Activated CD4-positive, alpha-beta memory T cell treated with anti-CD3 and anti-CD28 coated beads for 36 hours (primary cell): ENCODE measurements at regions of chr1 and their contacts with region 1.

Region 1: GRCh38 chr1:36149237-36149972 is at the start of gene TRAPPC3:
- DNase-seq: peak; percentile 100
- H3K4me3 Mint-ChIP-seq: peak within 1 kb of the TSS; percentile 100
- H3K27ac Mint-ChIP-seq: peak within 1 kb of the TSS; percentile 92
- H3K4me1 Mint-ChIP-seq: peaks cover 67% of the 10 kb centered on the region
- H3K27me3 Mint-ChIP-seq: no peaks in the 10 kb centered on the region
- total RNA-seq, gene TRAPPC3: 56.7 to 56.8 TPM

Region 2: DNA sequence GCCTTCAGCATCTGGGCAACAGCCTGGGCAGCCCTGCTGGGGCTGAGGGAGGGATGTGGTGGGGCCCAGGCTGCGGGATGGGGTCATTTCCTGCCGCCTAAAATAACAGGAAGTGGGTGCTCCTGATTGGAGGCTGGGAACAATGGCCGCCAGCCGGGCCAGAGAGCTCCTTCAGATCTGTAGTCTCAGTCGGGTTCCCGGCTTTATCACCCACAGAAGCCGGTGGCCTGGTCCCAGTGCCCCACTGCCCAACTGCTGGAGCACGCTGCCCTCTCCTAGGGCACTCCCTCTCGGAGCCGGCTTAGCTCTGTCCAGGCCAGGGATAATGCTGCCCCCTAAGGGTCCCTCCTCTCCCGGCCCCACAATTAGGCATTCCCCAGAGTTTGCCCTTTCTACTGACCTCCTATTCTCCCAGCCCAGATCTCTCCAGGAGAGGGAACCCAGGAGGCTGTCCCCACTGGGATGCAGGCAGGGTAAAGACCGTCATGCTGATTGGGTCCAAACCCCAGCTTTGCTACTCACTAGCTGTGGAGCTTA is 11.6 kb after region 1 on chr1:
- CTCF ChIA-PET with region 1: interaction called, 110 read pairs
- POLR2A ChIA-PET with region 1: interaction called, 69 read pairs
- intact Hi-C with region 1: loop called (anchors 1 kb)
- DNase-seq: peak; percentile 88
- H3K4me3 Mint-ChIP-seq: peak overlapping the region; percentile 72
- H3K27ac Mint-ChIP-seq: peak overlapping the region; percentile 95
- H3K4me1 Mint-ChIP-seq: peaks cover 59% of the 10 kb centered on the region
- H3K27me3 Mint-ChIP-seq: no peaks in the 10 kb centered on the region

Region 3: GRCh38 chr1:36223993-36224536 is 74.7 kb after region 1 on chr1 and contains the start of gene THRAP3:
- CTCF ChIA-PET with region 1: interaction called, 37 read pairs
- POLR2A ChIA-PET with region 1: interaction called, 13 read pairs
- intact Hi-C with region 1: loop called (anchors 1 kb)
- DNase-seq: peak; percentile 100
- H3K4me3 Mint-ChIP-seq: peak within 1 kb of the TSS; percentile 99
- H3K27ac Mint-ChIP-seq: peak within 1 kb of the TSS; percentile 100
- H3K4me1 Mint-ChIP-seq: peaks cover 30% of the 10 kb centered on the region
- H3K27me3 Mint-ChIP-seq: no peaks in the 10 kb centered on the region
- total RNA-seq, gene THRAP3: 135 to 138 TPM

Region 4: DNA sequence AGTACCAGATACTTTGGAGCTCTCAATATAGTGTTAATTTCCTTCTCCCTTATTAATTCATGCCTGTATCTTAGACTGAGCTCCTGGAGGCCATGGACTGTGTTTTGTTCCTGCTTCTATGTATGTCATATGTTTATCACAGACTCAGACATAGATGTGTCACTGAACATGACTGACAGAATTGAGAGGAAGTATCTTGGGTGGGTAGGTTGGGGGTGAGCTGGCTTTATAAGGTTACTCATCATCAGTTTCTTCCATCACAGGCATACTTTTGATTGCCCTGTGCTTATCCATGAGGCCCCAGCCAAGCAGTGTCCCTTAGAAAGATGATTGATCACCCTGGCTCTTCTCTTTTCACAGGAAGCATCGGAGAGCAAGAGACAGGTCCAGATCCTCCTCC is 151.1 kb after region 1 on chr1:
- CTCF ChIA-PET with region 1: interaction called, 20 read pairs
- POLR2A ChIA-PET with region 1: no interaction called
- intact Hi-C with region 1: no loop called
- DNase-seq: peak; percentile 44
- H3K4me3 Mint-ChIP-seq: peak overlapping the region; percentile 3
- H3K27ac Mint-ChIP-seq: peak overlapping the region; percentile 95
- H3K4me1 Mint-ChIP-seq: peaks cover 61% of the 10 kb centered on the region
- H3K27me3 Mint-ChIP-seq: no peaks in the 10 kb centered on the region

Region 5: DNA sequence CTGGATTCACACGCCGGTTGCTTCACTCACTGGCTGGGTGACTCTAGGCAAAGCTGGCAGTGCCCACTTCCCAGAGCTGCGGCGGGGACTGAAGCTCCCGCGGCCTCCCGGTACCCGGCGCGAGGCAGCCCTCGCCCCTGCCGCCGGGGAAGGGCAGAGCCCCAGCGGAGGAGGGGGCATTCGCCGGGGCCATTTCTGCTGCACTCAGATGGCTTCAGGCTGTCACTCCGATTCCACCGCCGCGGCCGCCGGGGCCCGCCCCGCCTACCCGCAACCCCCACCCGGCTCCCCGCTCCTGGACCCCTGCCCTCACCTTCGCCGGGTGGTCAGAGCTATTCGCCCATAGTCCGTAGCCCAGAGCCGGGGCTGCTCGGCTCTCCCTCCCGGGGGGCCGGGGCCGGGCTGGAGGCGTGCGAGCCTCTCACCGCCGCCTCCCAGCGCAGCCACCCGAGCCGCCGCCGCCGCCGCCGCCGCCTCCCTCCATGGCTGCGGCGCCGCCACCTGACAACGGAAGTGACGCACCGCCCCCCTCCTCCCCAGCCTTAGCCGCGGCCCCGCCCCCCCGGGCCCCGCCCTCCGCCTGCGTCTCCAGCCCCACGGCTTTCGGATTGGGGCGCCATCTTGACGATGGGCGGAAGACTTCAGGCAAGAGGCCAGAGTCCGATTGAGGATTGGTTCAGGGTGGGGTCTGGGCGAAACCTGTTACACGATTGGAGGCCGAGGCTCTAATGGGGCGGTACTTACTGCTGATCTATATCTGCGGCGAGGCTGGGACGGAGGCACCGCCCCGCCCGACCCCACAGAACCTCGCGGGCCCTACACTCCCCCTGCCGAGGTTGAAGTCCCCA is 236.2 kb after region 1 on chr1 and contains the start of gene STK40:
- CTCF ChIA-PET with region 1: interaction called, 4 read pairs
- POLR2A ChIA-PET with region 1: interaction called, 3 read pairs
- intact Hi-C with region 1: loop called (anchors 1 kb)
- DNase-seq: peak; percentile 99
- H3K4me3 Mint-ChIP-seq: peak within 1 kb of the TSS; percentile 93
- H3K27ac Mint-ChIP-seq: peak within 1 kb of the TSS; percentile 100
- H3K4me1 Mint-ChIP-seq: peaks cover 56% of the 10 kb centered on the region
- H3K27me3 Mint-ChIP-seq: no peaks in the 10 kb centered on the region
- total RNA-seq, gene STK40: 57.3 to 57.4 TPM